Dendritic cell treated with granulocyte-macrophage colony-stimulating factor and Interleukin-4, amounts not matched to agents 40 ng/mL and 50 ng/mL, for 4 days (primary cell): ENCODE measurements at regions of chr2 and their contacts with region 1.

Region 1: GRCh38 chr2:33583194-33583938 is 15.7 kb downstream of the FAM98A start:
- H3K4me3 Mint-ChIP-seq: no peak overlapping the region
- H3K27ac Mint-ChIP-seq: no peak overlapping the region
- H3K4me1 Mint-ChIP-seq: peaks cover 25% of the 10 kb centered on the region
- H3K27me3 Mint-ChIP-seq: no peaks in the 10 kb centered on the region

Region 2: DNA sequence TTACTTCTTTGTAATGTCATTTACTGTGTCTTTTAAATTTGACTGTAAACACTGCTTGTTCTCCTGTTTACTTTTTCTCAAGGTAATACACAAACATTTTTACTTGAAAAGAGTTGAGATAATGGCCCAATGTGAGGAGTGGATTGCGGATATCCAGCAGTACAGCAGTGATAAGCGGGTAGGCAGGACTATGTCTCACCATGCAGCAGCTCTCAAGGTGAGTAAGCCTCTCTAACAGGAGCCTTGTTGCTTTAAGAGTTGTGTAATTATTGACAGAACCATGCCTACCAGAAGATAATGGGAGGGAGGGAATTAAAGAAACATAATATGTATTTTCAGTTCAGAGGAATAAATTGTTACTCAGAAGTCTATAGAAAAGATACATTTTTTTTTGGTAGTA is 972.0 kb before region 1 on chr2:
- intact Hi-C with region 1: loop called (anchors 5 kb)
- H3K4me3 Mint-ChIP-seq: no peak overlapping the region
- H3K27ac Mint-ChIP-seq: no peak overlapping the region
- H3K4me1 Mint-ChIP-seq: peaks cover 22% of the 10 kb centered on the region
- H3K27me3 Mint-ChIP-seq: no peaks in the 10 kb centered on the region

Region 3: GRCh38 chr2:33406622-33407021 is 176.7 kb before region 1 on chr2:
- intact Hi-C with region 1: loop called (anchors 5 kb)
- H3K4me3 Mint-ChIP-seq: no peak overlapping the region
- H3K27ac Mint-ChIP-seq: no peak overlapping the region
- H3K4me1 Mint-ChIP-seq: peaks cover 7% of the 10 kb centered on the region
- H3K27me3 Mint-ChIP-seq: no peaks in the 10 kb centered on the region

Region 4: GRCh38 chr2:33529771-33530351 is 53.5 kb before region 1 on chr2:
- intact Hi-C with region 1: loop called (anchors 5 kb)
- H3K4me3 Mint-ChIP-seq: no peak overlapping the region
- H3K27ac Mint-ChIP-seq: no peak overlapping the region
- H3K4me1 Mint-ChIP-seq: peaks cover 31% of the 10 kb centered on the region
- H3K27me3 Mint-ChIP-seq: no peaks in the 10 kb centered on the region